ENCODE measurements at regions of chr5 and their contacts with region 1.

Region 1: GRCh38 chr5:126594676-126595485 is at the start of gene ALDH7A1:
- DNase-seq: peak; percentile 95
- H3K4me3 ChIP-seq: peak within 1 kb of the TSS; percentile 68
- H3K27ac ChIP-seq: peak within 1 kb of the TSS; percentile 85
- H3K4me1 ChIP-seq: peaks cover 2% of the 10 kb centered on the region
- H3K27me3 ChIP-seq: no peaks in the 10 kb centered on the region
- CTCF ChIP-seq: peak; percentile 66
- total RNA-seq, gene ALDH7A1: 95.2 and 112 TPM in 2 replicates

Region 2: GRCh38 chr5:126208711-126209305 is 386.1 kb before region 1 on chr5:
- CTCF ChIA-PET with region 1: no interaction called
- POLR2A ChIA-PET with region 1: no interaction called
- intact Hi-C with region 1: no loop called
- DNase-seq: no peak
- H3K4me3 ChIP-seq: no peak overlapping the region
- H3K27ac ChIP-seq: no peak overlapping the region
- H3K4me1 ChIP-seq: no peaks in the 10 kb centered on the region
- H3K27me3 ChIP-seq: no peaks in the 10 kb centered on the region
- CTCF ChIP-seq: no peak

Region 3: DNA sequence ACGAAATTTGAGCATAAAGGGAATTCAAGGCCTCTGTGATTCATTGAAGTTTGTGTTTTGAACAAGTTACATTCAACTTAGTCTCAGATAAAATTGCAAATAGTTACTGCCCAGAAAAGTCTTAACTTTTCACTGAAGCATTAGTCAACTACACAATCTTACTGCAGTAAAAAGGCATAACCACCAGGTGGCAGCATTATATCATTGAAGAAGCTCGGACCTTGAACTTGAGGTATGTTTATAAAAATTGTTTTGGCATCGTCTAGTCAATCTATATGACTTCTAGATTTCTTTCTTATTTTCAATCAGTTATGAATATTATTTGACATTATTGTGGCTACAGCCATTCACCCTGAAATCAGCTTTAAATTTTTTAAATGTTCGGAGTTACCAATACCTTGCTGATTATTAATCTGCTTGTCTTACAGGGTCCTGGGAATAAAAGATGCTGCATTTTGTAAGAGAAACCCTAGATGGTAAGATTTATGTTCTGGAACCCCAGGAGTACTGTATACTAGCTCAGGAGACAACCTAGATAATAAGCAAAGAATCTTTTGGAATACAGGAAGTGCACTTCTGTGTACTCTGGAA is 255.6 kb before region 1 on chr5:
- CTCF ChIA-PET with region 1: interaction called, 3 read pairs
- POLR2A ChIA-PET with region 1: no interaction called
- intact Hi-C with region 1: loop called (anchors 1 kb)
- DNase-seq: peak; percentile 69
- H3K4me3 ChIP-seq: no peak overlapping the region
- H3K27ac ChIP-seq: no peak overlapping the region
- H3K4me1 ChIP-seq: no peaks in the 10 kb centered on the region
- H3K27me3 ChIP-seq: peaks cover 9% of the 10 kb centered on the region
- CTCF ChIP-seq: peak; percentile 85

Region 4: DNA sequence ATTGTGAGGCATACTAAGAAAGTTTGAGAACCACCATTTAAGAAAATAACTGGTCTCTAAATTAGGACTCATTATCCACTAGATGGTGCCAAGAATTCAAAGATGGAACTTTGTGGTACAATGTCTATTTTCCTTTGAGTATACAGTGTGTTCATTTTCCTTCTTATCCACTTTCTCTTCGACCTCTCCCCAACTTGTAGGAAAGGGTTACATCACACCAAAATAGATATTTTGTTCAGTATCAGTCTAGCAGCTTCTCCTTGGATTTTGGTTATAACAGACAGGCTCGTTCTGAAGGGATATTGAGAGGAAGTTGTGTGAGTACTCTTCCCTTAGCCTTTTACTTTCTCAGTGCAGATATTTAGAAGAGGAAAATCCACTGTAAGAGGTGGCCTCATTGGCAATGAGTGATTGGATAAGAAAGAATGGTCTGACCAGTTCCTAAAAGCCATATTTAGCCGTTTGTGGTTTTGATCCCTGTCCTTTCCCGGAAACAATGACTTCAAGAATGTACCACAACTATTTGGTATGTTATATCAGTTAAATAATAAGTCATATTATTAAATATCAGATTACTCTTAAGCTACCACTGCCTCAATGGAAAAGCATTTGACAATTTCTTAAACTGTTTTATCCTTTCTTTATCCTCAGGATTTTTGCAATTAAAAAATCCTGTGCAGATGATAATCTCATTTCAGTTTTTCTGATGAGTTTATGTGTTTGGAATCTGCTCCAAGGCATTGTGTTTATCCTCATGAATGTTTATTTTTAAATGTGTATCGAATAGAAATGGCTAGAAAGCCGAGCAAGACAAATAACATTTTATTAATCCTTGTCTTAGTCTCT is 240.6 kb before region 1 on chr5:
- CTCF ChIA-PET with region 1: no interaction called
- POLR2A ChIA-PET with region 1: no interaction called
- intact Hi-C with region 1: loop called (anchors 5 kb)
- DNase-seq: peak; percentile 62
- H3K4me3 ChIP-seq: no peak overlapping the region
- H3K27ac ChIP-seq: no peak overlapping the region
- H3K4me1 ChIP-seq: no peaks in the 10 kb centered on the region
- H3K27me3 ChIP-seq: no peaks in the 10 kb centered on the region
- CTCF ChIP-seq: peak; percentile 53